ENCODE measurements at regions of chr14 and their contacts with region 1.

Region 1: DNA sequence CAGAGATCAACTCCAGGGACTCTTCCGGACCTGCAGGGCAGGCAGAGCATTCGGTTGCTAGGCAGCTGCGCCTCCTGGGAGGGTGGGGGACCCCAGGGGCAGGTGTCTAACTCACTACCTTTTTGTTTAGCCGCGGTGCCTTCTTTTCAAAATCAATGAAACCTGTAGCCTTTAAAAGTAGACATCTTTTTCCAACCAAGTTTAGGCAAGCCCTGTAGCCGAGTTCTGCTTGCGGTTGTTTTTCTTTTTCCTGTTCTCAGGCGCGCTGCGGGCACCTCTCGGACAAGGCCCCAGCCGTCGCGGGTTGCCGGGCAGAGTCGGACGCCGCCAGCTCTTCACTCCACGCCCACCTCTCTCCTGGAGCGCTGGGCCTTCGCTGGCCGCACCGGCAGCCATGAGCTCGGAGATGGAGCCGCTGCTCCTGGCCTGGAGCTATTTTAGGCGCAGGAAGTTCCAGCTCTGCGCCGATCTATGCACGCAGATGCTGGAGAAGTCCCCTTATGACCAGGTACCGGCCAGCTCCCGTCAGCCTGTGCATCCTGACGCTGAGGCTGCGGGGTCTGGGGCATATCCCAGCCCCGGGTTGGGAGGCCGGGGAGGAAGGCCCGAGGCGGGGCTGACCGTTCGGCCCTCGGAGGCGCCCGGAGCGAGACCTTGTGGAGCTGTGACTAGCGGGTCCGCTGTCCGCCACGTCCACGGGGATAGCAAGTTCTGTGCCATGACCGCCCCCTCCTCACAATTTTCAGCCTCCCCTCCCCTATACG is at the start of gene TTC8:
- DNase-seq: peak; percentile 71 to 92 (median 85)
- ATAC-seq: peak; percentile 95
- H3K4me3 ChIP-seq: peak within 1 kb of the TSS; percentile 81 to 89
- H3K4me3 Mint-ChIP-seq: peak within 1 kb of the TSS; percentile 81
- H3K27ac ChIP-seq: peak within 1 kb of the TSS; percentile 69 to 90
- H3K27ac Mint-ChIP-seq: peak within 1 kb of the TSS; percentile 99
- H3K4me1 ChIP-seq: peaks cover 10% of the 10 kb centered on the region
- H3K4me1 Mint-ChIP-seq: peaks cover 13% of the 10 kb centered on the region
- H3K27me3 ChIP-seq: no peaks in the 10 kb centered on the region
- H3K27me3 Mint-ChIP-seq: peaks cover 5% of the 10 kb centered on the region
- CTCF ChIP-seq: no peak
- total RNA-seq, gene TTC8: 1.3 to 1.9 TPM

Region 2: GRCh38 chr14:88562831-88563686 is 261.4 kb before region 1 on chr14 and contains the start of gene ZC3H14:
- CTCF ChIA-PET with region 1: no interaction called
- POLR2A ChIA-PET with region 1: no interaction called
- intact Hi-C with region 1: loop called (anchors 1 to 5 kb)
- DNase-seq: peak; percentile 69 to 94 (median 86)
- ATAC-seq: peak; percentile 95
- H3K4me3 ChIP-seq: peak within 1 kb of the TSS; percentile 75 to 91
- H3K4me3 Mint-ChIP-seq: peak within 1 kb of the TSS; percentile 96
- H3K27ac ChIP-seq: peak within 1 kb of the TSS; percentile 52 to 66
- H3K27ac Mint-ChIP-seq: peak within 1 kb of the TSS; percentile 91
- H3K4me1 ChIP-seq: peaks cover 20% of the 10 kb centered on the region
- H3K4me1 Mint-ChIP-seq: peaks cover 35% of the 10 kb centered on the region
- H3K27me3 ChIP-seq: no peaks in the 10 kb centered on the region
- H3K27me3 Mint-ChIP-seq: peaks cover 7% of the 10 kb centered on the region
- CTCF ChIP-seq: no peak
- total RNA-seq, gene ZC3H14: 36.3 to 39.3 TPM

Region 3: GRCh38 chr14:88568196-88568595 is 256.3 kb before region 1 on chr14:
- CTCF ChIA-PET with region 1: no interaction called
- POLR2A ChIA-PET with region 1: no interaction called
- intact Hi-C with region 1: loop called in 1 of 2 experiments (anchors 5 kb)
- DNase-seq: no peak
- ATAC-seq: no peak
- H3K4me3 ChIP-seq: no peak overlapping the region
- H3K4me3 Mint-ChIP-seq: no peak overlapping the region
- H3K27ac ChIP-seq: no peak overlapping the region
- H3K27ac Mint-ChIP-seq: peak overlapping the region; percentile 62
- H3K4me1 ChIP-seq: peaks cover 13% of the 10 kb centered on the region
- H3K4me1 Mint-ChIP-seq: peaks cover 20% of the 10 kb centered on the region
- H3K27me3 ChIP-seq: no peaks in the 10 kb centered on the region
- H3K27me3 Mint-ChIP-seq: no peaks in the 10 kb centered on the region
- CTCF ChIP-seq: no peak

Region 4: GRCh38 chr14:88792572-88793258 is 31.8 kb before region 1 on chr14 and contains the start of gene EML5:
- CTCF ChIA-PET with region 1: interaction called, 8 read pairs
- POLR2A ChIA-PET with region 1: interaction called, 18 read pairs
- intact Hi-C with region 1: loop called (anchors 1 kb)
- DNase-seq: peak; percentile 64 to 90 (median 81)
- ATAC-seq: peak; percentile 86
- H3K4me3 ChIP-seq: peak within 1 kb of the TSS; percentile 72 to 86
- H3K4me3 Mint-ChIP-seq: peak within 1 kb of the TSS; percentile 93
- H3K27ac ChIP-seq: peak within 1 kb of the TSS; percentile 53
- H3K27ac Mint-ChIP-seq: peak within 1 kb of the TSS; percentile 80
- H3K4me1 ChIP-seq: peaks cover 9% of the 10 kb centered on the region
- H3K4me1 Mint-ChIP-seq: peaks cover 22% of the 10 kb centered on the region
- H3K27me3 ChIP-seq: no peaks in the 10 kb centered on the region
- H3K27me3 Mint-ChIP-seq: no peaks in the 10 kb centered on the region
- CTCF ChIP-seq: peak; percentile 15
- total RNA-seq, gene EML5: 2.5 to 3.5 TPM

Region 5: GRCh38 chr14:90256354-90257131 is 1432.0 kb after region 1 on chr14 and contains the start of gene PSMC1:
- CTCF ChIA-PET with region 1: no interaction called
- POLR2A ChIA-PET with region 1: no interaction called
- intact Hi-C with region 1: loop called in 1 of 2 experiments (anchors 10 kb)
- DNase-seq: peak; percentile 78 to 92 (median 85)
- ATAC-seq: peak; percentile 94
- H3K4me3 ChIP-seq: peak within 1 kb of the TSS; percentile 79 to 95
- H3K4me3 Mint-ChIP-seq: peak within 1 kb of the TSS; percentile 99
- H3K27ac ChIP-seq: peak within 1 kb of the TSS; percentile 73 to 80
- H3K27ac Mint-ChIP-seq: peak within 1 kb of the TSS; percentile 97
- H3K4me1 ChIP-seq: peaks cover 17% of the 10 kb centered on the region
- H3K4me1 Mint-ChIP-seq: peaks cover 32% of the 10 kb centered on the region
- H3K27me3 ChIP-seq: no peaks in the 10 kb centered on the region
- H3K27me3 Mint-ChIP-seq: peaks cover 7% of the 10 kb centered on the region
- CTCF ChIP-seq: no peak
- total RNA-seq, gene PSMC1: 76.8 to 85.0 TPM

Region 6: GRCh38 chr14:90331497-90332435 is 1507.3 kb after region 1 on chr14 and contains the start of gene NRDE2:
- CTCF ChIA-PET with region 1: no interaction called
- POLR2A ChIA-PET with region 1: no interaction called
- intact Hi-C with region 1: loop called in 1 of 2 experiments (anchors 2 kb)
- DNase-seq: peak; percentile 81 to 97 (median 93)
- ATAC-seq: peak; percentile 95
- H3K4me3 ChIP-seq: peak within 1 kb of the TSS; percentile 86 to 90
- H3K4me3 Mint-ChIP-seq: peak within 1 kb of the TSS; percentile 90
- H3K27ac ChIP-seq: peak within 1 kb of the TSS; percentile 63 to 88
- H3K27ac Mint-ChIP-seq: peak within 1 kb of the TSS; percentile 94
- H3K4me1 ChIP-seq: peaks cover 21% of the 10 kb centered on the region
- H3K4me1 Mint-ChIP-seq: peaks cover 32% of the 10 kb centered on the region
- H3K27me3 ChIP-seq: no peaks in the 10 kb centered on the region
- H3K27me3 Mint-ChIP-seq: peaks cover 11% of the 10 kb centered on the region
- CTCF ChIP-seq: no peak
- total RNA-seq, gene NRDE2: 22.8 to 23.0 TPM

Measured in CD8-positive, alpha-beta T cell (primary cell).